CD8-positive, alpha-beta T cell (primary cell): ENCODE measurements at regions of chr1 and their contacts with region 1.

Region 1: DNA sequence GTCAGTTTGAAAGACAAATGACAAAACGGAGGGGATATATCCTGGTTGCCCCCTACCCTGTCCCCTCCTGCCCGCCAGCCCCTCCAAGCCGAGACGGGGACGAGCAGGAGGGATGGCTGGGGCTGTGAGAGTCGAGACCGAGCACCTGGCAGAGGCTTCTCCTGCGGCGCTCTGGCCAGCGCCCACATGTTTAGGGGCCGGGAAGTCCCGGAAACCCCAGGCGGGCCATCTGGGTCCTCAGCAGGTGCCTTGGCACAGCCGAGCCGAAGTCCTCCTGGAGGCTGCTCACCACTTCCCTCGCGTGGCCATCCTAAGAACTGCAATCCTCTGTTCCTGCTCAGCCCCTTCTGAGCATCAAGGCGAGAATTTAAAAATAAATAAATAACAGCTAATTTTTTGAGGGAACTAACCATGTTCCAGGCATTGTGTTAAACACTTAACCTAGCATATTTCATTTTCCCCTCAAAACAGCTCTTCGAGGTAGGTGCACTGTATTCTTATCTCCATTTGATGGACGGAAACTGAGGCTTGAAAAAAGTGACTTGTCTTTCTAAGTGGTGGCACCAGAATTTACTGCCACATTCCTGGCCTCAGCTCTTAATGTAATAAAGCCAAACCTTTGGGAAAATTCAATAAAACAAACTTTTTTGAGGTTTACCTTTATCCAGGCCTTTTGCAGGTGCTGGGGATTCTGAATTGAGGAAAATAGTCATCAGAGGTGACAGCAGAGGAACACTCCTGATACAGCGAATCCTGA is 3.5 kb upstream of the RIMS3 start:
- DNase-seq: peak; percentile 71 to 88 (median 86)
- ATAC-seq: peak; percentile 78
- H3K4me3 ChIP-seq: peak overlapping the region; percentile 37 to 46
- H3K4me3 Mint-ChIP-seq: peak overlapping the region; percentile 37
- H3K27ac ChIP-seq: no peak overlapping the region
- H3K27ac Mint-ChIP-seq: no peak overlapping the region
- H3K4me1 ChIP-seq: peaks cover 15% of the 10 kb centered on the region
- H3K4me1 Mint-ChIP-seq: peaks cover 13% of the 10 kb centered on the region
- H3K27me3 ChIP-seq: no peaks in the 10 kb centered on the region
- H3K27me3 Mint-ChIP-seq: no peaks in the 10 kb centered on the region
- CTCF ChIP-seq: peak; percentile 90

Region 2: DNA sequence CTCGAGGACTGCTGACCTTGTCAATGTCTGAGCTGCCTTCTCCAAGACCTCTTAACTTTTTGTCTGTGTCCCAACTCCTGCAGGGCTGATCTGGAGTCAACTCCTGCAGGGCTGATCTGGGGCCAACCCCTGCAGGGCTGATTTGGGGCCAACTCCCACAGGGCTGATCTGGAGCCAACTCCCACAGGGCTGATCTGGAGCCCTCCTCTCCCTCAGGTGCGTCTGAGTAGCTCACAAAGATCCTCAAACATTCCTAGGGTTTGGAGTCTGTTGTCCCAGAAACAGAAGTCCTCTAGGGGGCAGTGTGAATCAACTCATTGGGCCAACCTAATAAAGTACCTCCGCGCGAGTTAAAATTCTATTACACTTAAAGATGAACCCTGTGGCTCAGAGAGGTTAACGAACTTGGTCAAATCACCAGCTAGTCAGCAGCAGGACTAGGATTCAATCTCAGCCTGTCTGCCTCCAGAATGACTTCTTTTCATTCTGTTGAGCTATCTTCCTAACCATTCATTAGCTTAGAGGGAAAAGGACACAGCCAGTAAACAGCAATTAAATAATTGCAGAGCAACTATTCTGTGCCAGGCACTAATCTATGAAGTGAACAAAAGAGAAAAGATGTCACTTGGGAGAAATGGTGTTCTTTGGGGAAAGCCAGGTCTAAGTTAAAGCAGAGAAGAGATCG is 524.9 kb before region 1 on chr1:
- CTCF ChIA-PET with region 1: interaction called, 3 read pairs
- POLR2A ChIA-PET with region 1: no interaction called
- intact Hi-C with region 1: loop called in 1 of 2 experiments (anchors 2 kb)
- DNase-seq: peak; percentile 10 to 82 (median 51)
- ATAC-seq: peak; percentile 74
- H3K4me3 ChIP-seq: no peak overlapping the region
- H3K4me3 Mint-ChIP-seq: no peak overlapping the region
- H3K27ac ChIP-seq: no peak overlapping the region
- H3K27ac Mint-ChIP-seq: no peak overlapping the region
- H3K4me1 ChIP-seq: peaks cover 3% of the 10 kb centered on the region
- H3K4me1 Mint-ChIP-seq: peaks cover 6% of the 10 kb centered on the region
- H3K27me3 ChIP-seq: no peaks in the 10 kb centered on the region
- H3K27me3 Mint-ChIP-seq: peaks cover 20% of the 10 kb centered on the region
- CTCF ChIP-seq: peak; percentile 73

Region 3: DNA sequence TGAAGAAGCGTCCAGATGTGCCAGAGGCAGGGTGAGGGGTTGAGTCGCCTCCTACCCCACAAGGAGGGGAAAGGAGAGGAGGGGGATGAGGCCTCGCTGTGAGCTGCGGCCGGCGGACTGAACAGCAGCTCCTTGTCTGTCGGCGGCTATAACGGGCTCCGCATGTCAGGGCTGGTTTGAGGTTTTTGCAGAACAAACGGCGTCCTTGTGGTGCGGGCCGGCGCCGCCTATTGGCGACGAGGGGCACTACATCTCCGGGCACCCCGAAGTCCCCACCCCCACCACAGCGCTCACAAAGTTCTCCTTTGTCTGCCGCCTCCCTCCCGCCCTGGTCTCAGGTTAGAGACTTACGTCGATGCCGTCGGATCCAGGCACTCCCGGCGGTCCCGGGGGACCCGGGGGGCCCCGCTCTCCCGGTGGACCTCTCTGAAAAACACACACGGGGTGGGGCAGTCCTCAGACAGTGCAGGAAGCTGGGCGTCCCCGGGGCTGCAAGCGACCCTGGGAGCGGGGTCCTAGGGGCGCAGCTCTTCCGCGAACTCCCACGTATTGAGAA is 353.6 kb before region 1 on chr1:
- CTCF ChIA-PET with region 1: no interaction called
- POLR2A ChIA-PET with region 1: no interaction called
- intact Hi-C with region 1: loop called in 1 of 2 experiments (anchors 10 kb)
- DNase-seq: peak; percentile 71 to 92 (median 85)
- ATAC-seq: peak; percentile 81
- H3K4me3 ChIP-seq: peak overlapping the region; percentile 54 to 84
- H3K4me3 Mint-ChIP-seq: peak overlapping the region; percentile 84
- H3K27ac ChIP-seq: peak overlapping the region in 1 of 2 experiments; percentile 24
- H3K27ac Mint-ChIP-seq: peak overlapping the region; percentile 29
- H3K4me1 ChIP-seq: peaks cover 14% of the 10 kb centered on the region
- H3K4me1 Mint-ChIP-seq: peaks cover 27% of the 10 kb centered on the region
- H3K27me3 ChIP-seq: peaks cover 0 to 13% of the 10 kb centered on the region in 2 experiments
- H3K27me3 Mint-ChIP-seq: peaks cover 7% of the 10 kb centered on the region
- CTCF ChIP-seq: peak; percentile 95

Region 4: DNA sequence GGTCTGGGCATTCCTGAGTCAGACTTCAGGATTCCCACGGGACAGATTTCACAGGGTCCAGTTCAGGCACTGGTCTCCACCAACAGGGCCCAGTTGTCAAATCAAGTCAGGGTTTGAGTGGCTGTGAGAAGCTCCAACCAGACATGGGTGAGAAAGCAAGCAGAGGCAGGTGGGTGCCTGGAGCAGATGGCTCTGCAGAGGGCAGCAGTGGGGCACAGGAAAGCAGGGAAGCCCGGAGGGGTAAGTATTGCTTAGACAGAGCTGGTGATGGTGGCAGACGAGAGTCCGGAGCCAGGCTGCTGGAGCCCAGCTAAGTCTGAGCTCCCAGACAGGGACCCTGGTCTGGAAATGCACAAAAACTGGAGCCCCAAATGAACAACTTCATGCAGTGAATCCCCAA is 43.9 kb before region 1 on chr1:
- CTCF ChIA-PET with region 1: interaction called, 5 read pairs
- POLR2A ChIA-PET with region 1: no interaction called
- intact Hi-C with region 1: loop called (anchors 1 to 5 kb)
- DNase-seq: peak in 4 of 9 experiments; percentile 27 to 49 (median 33)
- ATAC-seq: no peak
- H3K4me3 ChIP-seq: no peak overlapping the region
- H3K4me3 Mint-ChIP-seq: no peak overlapping the region
- H3K27ac ChIP-seq: no peak overlapping the region
- H3K27ac Mint-ChIP-seq: no peak overlapping the region
- H3K4me1 ChIP-seq: peaks cover 13% of the 10 kb centered on the region
- H3K4me1 Mint-ChIP-seq: peaks cover 22% of the 10 kb centered on the region
- H3K27me3 ChIP-seq: no peaks in the 10 kb centered on the region
- H3K27me3 Mint-ChIP-seq: no peaks in the 10 kb centered on the region
- CTCF ChIP-seq: no peak

Region 5: DNA sequence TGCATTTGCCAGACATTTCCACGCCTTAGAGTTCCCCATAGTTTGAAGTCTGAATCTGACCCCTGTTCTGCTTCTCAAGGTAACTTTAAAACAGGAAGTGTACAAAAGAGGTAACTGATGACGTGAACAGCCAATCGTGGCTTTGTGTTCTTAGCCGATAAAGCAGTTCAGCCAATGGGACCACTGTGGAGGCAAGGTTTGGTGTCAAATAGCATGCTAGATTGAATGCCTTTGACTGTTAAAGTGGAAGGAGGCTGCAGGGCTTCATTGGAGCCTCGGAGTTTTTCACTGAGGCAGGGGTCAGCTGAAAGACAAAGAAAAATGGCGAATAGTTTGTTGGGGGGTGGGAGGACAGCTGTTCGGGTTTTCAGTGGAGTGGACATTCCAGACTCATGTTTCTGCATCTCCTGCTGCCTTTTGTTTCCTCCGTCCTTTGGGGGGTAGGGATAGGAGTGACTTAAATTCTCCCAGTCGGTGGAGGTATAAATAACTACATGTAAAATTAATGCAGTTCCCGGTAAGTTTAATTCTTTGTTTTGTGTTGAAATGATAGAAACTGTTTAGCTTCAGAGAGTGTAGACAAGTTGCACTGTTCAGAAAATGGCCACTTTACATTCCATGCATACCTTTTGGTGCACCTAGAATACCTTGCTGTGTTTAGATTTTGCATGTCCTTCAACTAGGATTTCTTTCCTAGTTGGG is 40.3 kb after region 1 on chr1:
- CTCF ChIA-PET with region 1: interaction called, 6 read pairs
- POLR2A ChIA-PET with region 1: no interaction called
- intact Hi-C with region 1: loop called in 1 of 2 experiments (anchors 1 kb)
- DNase-seq: peak; percentile 43 to 94 (median 74)
- ATAC-seq: peak; percentile 95
- H3K4me3 ChIP-seq: peak overlapping the region; percentile 63
- H3K4me3 Mint-ChIP-seq: peak overlapping the region; percentile 99
- H3K27ac ChIP-seq: peak overlapping the region; percentile 67 to 94
- H3K27ac Mint-ChIP-seq: peak overlapping the region; percentile 98
- H3K4me1 ChIP-seq: peaks cover 48% of the 10 kb centered on the region
- H3K4me1 Mint-ChIP-seq: peaks cover 69% of the 10 kb centered on the region
- H3K27me3 ChIP-seq: no peaks in the 10 kb centered on the region
- H3K27me3 Mint-ChIP-seq: no peaks in the 10 kb centered on the region
- CTCF ChIP-seq: no peak

Region 6: GRCh38 chr1:40802078-40802741 is 133.3 kb after region 1 on chr1:
- CTCF ChIA-PET with region 1: no interaction called
- POLR2A ChIA-PET with region 1: no interaction called
- intact Hi-C with region 1: loop called (anchors 1 to 5 kb)
- DNase-seq: peak; percentile 69 to 93 (median 84)
- ATAC-seq: peak; percentile 95
- H3K4me3 ChIP-seq: peak overlapping the region; percentile 51 to 87
- H3K4me3 Mint-ChIP-seq: peak overlapping the region; percentile 74
- H3K27ac ChIP-seq: peak overlapping the region; percentile 49 to 55
- H3K27ac Mint-ChIP-seq: peak overlapping the region; percentile 75
- H3K4me1 ChIP-seq: peaks cover 29% of the 10 kb centered on the region
- H3K4me1 Mint-ChIP-seq: peaks cover 30% of the 10 kb centered on the region
- H3K27me3 ChIP-seq: no peaks in the 10 kb centered on the region
- H3K27me3 Mint-ChIP-seq: no peaks in the 10 kb centered on the region
- CTCF ChIP-seq: no peak

Region 7: DNA sequence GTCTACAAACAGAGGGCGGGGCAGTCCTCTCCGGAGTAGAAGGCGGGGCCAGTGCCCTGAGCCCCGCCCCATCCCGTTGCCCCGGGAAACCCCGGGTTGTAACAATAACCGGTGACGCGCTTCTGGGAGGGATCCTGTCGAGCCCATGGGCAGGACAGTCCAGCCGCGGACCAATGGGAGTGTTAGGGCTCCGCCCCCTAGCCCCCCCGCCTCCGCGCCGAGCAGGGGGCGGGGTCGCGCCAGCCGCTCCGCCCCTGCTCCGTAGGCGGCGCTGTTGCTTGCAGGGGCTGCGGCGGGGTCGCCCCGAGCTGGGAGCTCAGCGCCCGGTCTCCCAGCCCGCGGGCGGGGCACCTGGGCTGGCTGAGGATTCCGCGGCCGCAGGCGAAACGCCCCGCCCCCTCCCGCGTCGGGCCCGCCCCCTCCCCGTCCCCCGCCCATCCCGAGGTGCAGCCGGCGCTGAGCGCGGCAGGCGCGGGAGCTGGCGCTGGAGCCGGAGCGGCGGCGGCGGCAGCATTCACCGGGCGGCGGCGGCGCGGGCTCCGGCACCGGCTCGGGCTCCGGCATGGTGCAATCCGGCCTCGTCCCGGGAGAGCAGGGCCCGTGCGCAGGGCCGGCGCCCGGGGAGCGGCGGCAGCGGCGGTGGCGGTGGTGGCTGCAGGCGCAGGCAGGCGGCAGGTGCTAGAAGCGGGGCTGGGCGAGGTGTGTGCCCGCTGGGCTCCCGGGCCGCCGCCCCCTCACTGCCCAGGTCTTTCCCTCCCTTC is 692.2 kb after region 1 on chr1 and contains the start of gene FOXO6:
- CTCF ChIA-PET with region 1: no interaction called
- POLR2A ChIA-PET with region 1: no interaction called
- intact Hi-C with region 1: loop called in 1 of 2 experiments (anchors 5 kb)
- DNase-seq: peak; percentile 85 to 97 (median 94)
- ATAC-seq: peak; percentile 90
- H3K4me3 ChIP-seq: peak within 1 kb of the TSS; percentile 35 to 52
- H3K4me3 Mint-ChIP-seq: peak within 1 kb of the TSS; percentile 82
- H3K27ac ChIP-seq: peak within 1 kb of the TSS; percentile 14 to 25
- H3K27ac Mint-ChIP-seq: peak within 1 kb of the TSS; percentile 28
- H3K4me1 ChIP-seq: peaks cover 22% of the 10 kb centered on the region
- H3K4me1 Mint-ChIP-seq: peaks cover 23% of the 10 kb centered on the region
- H3K27me3 ChIP-seq: peaks cover 10 to 11% of the 10 kb centered on the region in 2 experiments
- H3K27me3 Mint-ChIP-seq: peaks cover 29% of the 10 kb centered on the region
- CTCF ChIP-seq: no peak
- total RNA-seq, gene FOXO6: 1.4 to 1.7 TPM